Activated CD4-positive, alpha-beta memory T cell treated with anti-CD3 and anti-CD28 coated beads for 36 hours (primary cell): ENCODE measurements at regions of chr11 and their contacts with region 1.

Region 1: DNA sequence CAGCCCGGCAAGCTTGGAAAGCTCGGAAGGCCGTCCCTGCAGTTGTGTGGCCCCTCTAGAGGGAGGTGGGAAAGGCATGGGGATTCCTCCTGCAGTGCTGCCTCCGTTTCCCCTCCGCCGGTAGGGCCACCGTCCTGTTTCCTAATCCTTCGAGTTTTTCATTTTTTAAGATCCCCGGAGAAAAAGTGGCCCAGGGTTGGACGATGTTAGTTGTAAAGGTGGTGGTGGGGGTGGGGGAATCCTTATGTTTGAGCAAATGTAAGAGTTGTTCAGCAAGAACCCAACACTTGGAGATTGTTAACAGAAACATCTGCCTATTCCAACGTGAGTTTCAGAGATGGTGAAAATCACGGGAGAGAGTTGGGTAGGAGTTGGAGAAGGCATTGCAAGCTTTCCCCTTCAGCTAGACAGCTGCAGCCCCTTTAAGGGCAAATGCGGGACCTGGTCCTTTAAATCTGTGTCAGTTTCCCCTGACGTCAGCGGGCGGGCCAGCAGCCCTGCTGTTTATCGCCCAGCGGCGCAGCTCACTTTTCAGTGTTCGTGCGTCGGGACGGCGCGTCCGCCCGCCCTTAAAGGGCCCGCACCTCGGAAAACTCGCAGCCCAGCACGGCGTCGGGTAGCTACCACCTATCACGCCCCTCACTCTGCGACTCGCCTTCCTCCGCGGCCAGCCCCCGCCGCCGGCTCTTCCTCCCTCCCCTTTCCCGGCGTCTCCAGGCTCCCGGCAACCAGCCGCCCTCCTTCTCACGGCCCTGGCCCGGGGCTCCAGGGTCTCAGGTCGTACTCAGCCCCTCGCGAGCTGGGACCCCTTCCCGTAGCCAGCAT is at the start of gene SIDT2:
- DNase-seq: peak; percentile 94
- H3K4me3 Mint-ChIP-seq: peak within 1 kb of the TSS; percentile 92
- H3K27ac Mint-ChIP-seq: peak within 1 kb of the TSS; percentile 79
- H3K4me1 Mint-ChIP-seq: peaks cover 29% of the 10 kb centered on the region
- H3K27me3 Mint-ChIP-seq: no peaks in the 10 kb centered on the region
- total RNA-seq, gene SIDT2: 21.5 to 26.0 TPM

Region 2: DNA sequence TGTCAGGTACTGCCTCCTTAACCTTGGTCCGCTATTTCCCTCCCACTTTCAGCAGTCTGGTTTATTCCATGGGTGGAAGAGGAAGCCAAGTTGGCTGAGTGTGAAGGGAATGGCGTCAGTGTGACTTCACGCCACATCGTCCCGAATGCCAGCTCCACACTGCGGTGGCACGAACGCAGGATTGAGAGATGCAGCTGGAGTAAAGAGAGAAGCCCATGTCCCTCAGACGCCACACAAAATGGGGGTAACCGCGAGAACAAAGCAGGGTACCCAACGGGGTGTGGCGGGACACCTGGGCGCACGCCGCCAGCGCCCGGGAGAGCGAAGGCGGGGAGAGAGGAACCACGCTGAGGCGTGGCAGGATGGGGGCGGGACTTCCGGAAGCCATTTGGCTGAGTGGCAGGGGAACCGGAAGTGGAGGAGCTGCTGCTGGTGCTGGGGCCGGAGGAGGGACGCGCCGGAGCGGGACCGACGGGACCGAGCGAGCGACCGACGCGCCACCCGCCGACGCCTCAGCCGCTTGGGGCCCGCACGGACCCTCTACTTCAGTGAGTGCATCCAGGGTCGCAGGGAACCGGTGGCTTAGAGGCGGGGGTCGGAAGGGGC is 34.4 kb before region 1 on chr11 and contains the start of gene PAFAH1B2:
- CTCF ChIA-PET with region 1: interaction called, 9 read pairs
- POLR2A ChIA-PET with region 1: interaction called, 23 read pairs
- intact Hi-C with region 1: loop called (anchors 1 kb)
- DNase-seq: peak; percentile 97
- H3K4me3 Mint-ChIP-seq: peak within 1 kb of the TSS; percentile 96
- H3K27ac Mint-ChIP-seq: peak within 1 kb of the TSS; percentile 90
- H3K4me1 Mint-ChIP-seq: peaks cover 37% of the 10 kb centered on the region
- H3K27me3 Mint-ChIP-seq: no peaks in the 10 kb centered on the region
- total RNA-seq, gene PAFAH1B2: 61.3 to 61.5 TPM